ENCODE measurements at regions of chr1 and their contacts with region 1.

Region 1: GRCh38 chr1:203625628-203626019 is 1.0 kb upstream of the ATP2B4 start:
- DNase-seq: peak; percentile 89
- H3K4me3 ChIP-seq: no peak overlapping the region
- H3K27ac ChIP-seq: no peak overlapping the region
- H3K4me1 ChIP-seq: peaks cover 40% of the 10 kb centered on the region
- H3K27me3 ChIP-seq: no peaks in the 10 kb centered on the region
- CTCF ChIP-seq: peak; percentile 37 to 39
- POLR2A ChIP-seq: no peak

Region 2: GRCh38 chr1:203512830-203513611 is 112.6 kb before region 1 on chr1:
- CTCF ChIA-PET with region 1: interaction called, 62 read pairs
- POLR2A ChIA-PET with region 1: no interaction called
- dilution Hi-C with region 1: no loop called
- intact Hi-C with region 1: loop called (anchors 2 kb)
- DNase-seq: peak; percentile 85
- H3K4me3 ChIP-seq: no peak overlapping the region
- H3K27ac ChIP-seq: peak overlapping the region; percentile 83
- H3K4me1 ChIP-seq: peaks cover 35% of the 10 kb centered on the region
- H3K27me3 ChIP-seq: no peaks in the 10 kb centered on the region
- CTCF ChIP-seq: no peak
- POLR2A ChIP-seq: no peak

Region 3: DNA sequence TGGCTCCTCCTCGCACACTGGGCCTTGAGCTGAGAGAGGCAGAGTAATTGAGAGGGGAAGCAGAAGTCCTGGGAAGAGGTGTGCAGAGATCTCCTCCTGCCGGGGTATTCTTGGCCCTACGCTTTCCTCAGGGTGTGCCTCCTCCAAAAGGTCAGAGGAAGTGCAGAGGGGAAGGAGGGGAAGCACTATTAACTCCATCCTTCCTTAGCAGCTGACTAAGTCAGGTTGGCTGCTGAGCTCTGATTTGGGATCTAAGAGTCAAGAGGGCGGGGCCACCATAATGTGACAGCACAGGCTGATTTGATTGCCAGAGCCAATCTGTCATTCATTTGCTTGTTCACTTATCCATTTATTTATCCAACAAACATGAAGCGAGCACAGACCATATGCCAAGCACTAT is 13.3 kb after region 1 on chr1:
- CTCF ChIA-PET with region 1: interaction called, 5 read pairs
- POLR2A ChIA-PET with region 1: no interaction called
- dilution Hi-C with region 1: no loop called
- intact Hi-C with region 1: loop called (anchors 1 kb)
- DNase-seq: peak; percentile 65
- H3K4me3 ChIP-seq: no peak overlapping the region
- H3K27ac ChIP-seq: no peak overlapping the region
- H3K4me1 ChIP-seq: peaks cover 27% of the 10 kb centered on the region
- H3K27me3 ChIP-seq: no peaks in the 10 kb centered on the region
- CTCF ChIP-seq: no peak
- POLR2A ChIP-seq: no peak

Region 4: DNA sequence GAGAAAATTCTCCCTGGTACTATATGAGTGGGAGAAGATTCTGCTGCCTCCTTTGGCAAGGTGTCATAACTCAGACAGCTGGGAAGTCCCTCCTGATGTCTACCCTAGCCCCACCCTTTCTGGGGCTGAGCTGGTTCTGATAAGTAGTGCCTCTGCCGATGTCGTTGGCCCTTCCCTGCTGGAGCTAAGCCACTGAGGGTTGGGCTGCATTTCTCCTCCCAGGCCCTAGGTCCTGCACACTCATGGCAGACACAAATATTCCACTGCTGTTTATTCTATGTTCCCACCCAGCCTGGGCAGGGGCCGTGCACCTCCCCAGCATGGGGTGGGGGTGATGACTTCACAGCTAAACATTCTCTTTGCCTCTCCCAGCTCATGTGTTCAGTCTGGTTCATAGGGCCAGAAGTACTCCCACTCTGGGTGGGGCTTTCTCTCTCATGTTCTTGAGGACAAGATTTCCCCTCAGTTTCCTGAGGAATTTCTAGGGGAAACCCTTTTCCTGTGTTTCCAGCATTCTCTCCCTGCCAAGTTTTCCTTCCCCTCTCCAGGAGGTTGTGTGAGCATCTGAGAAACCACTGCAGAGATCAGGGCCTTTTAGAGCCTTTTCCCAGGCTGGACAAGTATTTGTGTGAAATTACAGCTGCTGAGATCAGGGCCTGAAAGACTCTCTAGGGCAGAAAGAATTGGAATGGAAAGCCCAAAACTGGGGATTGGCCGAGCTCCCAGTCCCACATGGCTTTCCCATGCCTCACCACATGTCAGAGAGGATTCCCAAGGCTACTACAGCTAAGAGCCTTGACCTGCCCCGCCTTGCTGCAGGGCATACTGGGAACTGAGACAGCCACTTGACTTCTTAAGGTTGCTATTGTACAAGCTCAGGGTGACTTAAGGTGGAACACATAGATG is 67.2 kb after region 1 on chr1:
- CTCF ChIA-PET with region 1: interaction called, 53 read pairs
- POLR2A ChIA-PET with region 1: interaction called, 4 read pairs
- dilution Hi-C with region 1: no loop called
- intact Hi-C with region 1: loop called (anchors 1 kb)
- DNase-seq: peak; percentile 88
- H3K4me3 ChIP-seq: no peak overlapping the region
- H3K27ac ChIP-seq: peak overlapping the region; percentile 48
- H3K4me1 ChIP-seq: peaks cover 20% of the 10 kb centered on the region
- H3K27me3 ChIP-seq: no peaks in the 10 kb centered on the region
- CTCF ChIP-seq: no peak
- POLR2A ChIP-seq: no peak

Region 5: GRCh38 chr1:203781953-203782352 is 156.3 kb after region 1 on chr1:
- CTCF ChIA-PET with region 1: no interaction called
- POLR2A ChIA-PET with region 1: no interaction called
- dilution Hi-C with region 1: no loop called
- intact Hi-C with region 1: no loop called
- DNase-seq: no peak
- H3K4me3 ChIP-seq: no peak overlapping the region
- H3K27ac ChIP-seq: no peak overlapping the region
- H3K4me1 ChIP-seq: peaks cover 3% of the 10 kb centered on the region
- H3K27me3 ChIP-seq: peaks cover 0 to 2% of the 10 kb centered on the region in 2 experiments
- CTCF ChIP-seq: no peak
- POLR2A ChIP-seq: no peak

Region 6: DNA sequence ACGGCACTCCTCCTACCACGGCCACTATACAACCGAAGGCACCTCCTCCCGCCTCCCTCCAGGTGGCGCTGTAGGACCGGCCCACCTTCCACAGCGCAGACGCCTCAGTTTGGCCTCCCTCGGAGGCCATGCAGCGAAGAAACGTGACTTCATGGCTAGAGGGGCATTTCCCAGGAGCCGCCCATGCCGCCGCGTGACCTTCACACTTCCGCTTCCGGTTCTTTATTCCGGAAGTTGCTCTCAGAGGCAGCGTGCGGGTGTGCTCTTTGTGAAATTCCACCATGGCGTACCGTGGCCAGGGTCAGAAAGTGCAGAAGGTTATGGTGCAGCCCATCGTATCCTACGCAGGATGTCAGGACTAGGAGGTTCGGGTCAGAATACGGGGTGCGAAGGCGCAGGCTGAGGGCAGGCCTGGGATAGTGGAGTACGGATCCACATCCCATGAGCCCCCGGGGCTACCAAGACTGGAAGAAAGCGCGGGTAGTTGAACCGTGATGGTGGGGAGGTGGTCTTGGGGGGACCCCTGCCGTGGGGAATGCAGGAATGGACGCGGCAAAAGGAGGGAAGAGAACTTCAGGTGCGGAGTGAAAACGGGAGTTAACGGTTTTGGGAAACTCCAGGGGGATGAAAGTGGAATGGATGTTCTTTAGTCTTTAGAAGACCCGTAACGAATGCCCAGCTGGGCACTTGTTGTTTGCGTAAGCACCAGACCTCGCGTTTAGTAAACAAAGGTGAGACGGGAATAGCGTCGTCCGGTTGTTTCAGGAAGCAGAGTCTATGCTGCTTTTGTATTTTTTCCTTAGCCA is 236.0 kb after region 1 on chr1 and contains the start of gene SNRPE:
- CTCF ChIA-PET with region 1: no interaction called
- POLR2A ChIA-PET with region 1: no interaction called
- dilution Hi-C with region 1: no loop called
- intact Hi-C with region 1: loop called (anchors 10 kb)
- DNase-seq: peak; percentile 99
- H3K4me3 ChIP-seq: peak within 1 kb of the TSS; percentile 67 to 99 (median 94)
- H3K27ac ChIP-seq: peak within 1 kb of the TSS; percentile 71
- H3K4me1 ChIP-seq: peaks cover 23% of the 10 kb centered on the region
- H3K27me3 ChIP-seq: no peaks in the 10 kb centered on the region
- CTCF ChIP-seq: peak; percentile 92 to 95
- POLR2A ChIP-seq: peak; percentile 84
- total RNA-seq, gene SNRPE: 199 and 219 TPM in 2 replicates

Measured in endothelial cell of umbilical vein (primary cell).